A673 (cell line): ENCODE measurements at regions of chr5 and their contacts with region 1.

Region 1: DNA sequence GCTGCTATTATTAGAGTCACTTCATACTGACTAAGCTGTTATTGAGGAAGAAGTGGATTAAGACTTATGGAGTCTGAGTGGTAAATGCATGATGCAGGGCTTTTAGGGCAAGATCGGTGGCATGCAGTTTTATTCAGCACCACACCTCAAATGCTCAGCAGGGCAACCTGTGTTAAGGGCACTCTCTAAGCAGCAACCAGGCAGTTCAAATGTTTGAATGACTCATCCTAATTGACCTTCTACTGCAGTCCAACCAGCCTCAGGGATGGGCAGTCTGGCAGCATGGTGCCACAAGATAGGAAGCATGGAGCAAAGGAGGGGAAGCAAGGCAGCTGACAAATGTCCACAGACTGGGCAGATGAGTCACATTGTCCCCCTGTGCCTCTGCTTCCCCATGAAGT is 80.2 kb upstream of the MIER3 start:
- DNase-seq: no peak
- H3K4me3 ChIP-seq: no peak overlapping the region
- H3K27ac ChIP-seq: no peak overlapping the region
- H3K4me1 ChIP-seq: peaks cover 9% of the 10 kb centered on the region
- H3K27me3 ChIP-seq: no peaks in the 10 kb centered on the region
- CTCF ChIP-seq: no peak

Region 2: GRCh38 chr5:57349214-57349613 is 317.1 kb after region 1 on chr5:
- CTCF ChIA-PET with region 1: no interaction called
- POLR2A ChIA-PET with region 1: no interaction called
- intact Hi-C with region 1: no loop called
- DNase-seq: no peak
- H3K4me3 ChIP-seq: no peak overlapping the region
- H3K27ac ChIP-seq: no peak overlapping the region
- H3K4me1 ChIP-seq: no peaks in the 10 kb centered on the region
- H3K27me3 ChIP-seq: peaks cover 6% of the 10 kb centered on the region
- CTCF ChIP-seq: no peak

Region 3: GRCh38 chr5:57439601-57440000 is 407.4 kb after region 1 on chr5:
- CTCF ChIA-PET with region 1: no interaction called
- POLR2A ChIA-PET with region 1: interaction called, 20 read pairs
- intact Hi-C with region 1: no loop called
- DNase-seq: peak; percentile 5
- H3K4me3 ChIP-seq: no peak overlapping the region
- H3K27ac ChIP-seq: no peak overlapping the region
- H3K4me1 ChIP-seq: peaks cover 35% of the 10 kb centered on the region
- H3K27me3 ChIP-seq: no peaks in the 10 kb centered on the region
- CTCF ChIP-seq: no peak